H1 (cell line): ENCODE measurements at regions of chr16 and their contacts with region 1.

Region 1: GRCh38 chr16:55842369-55843104 is 9.6 kb upstream of the CES1 start:
- DNase-seq: peak in 1 of 2 experiments; percentile 43
- H3K4me3 ChIP-seq: no peak overlapping the region
- H3K27ac ChIP-seq: no peak overlapping the region
- H3K4me1 ChIP-seq: no peaks in the 10 kb centered on the region
- H3K27me3 ChIP-seq: no peaks in the 10 kb centered on the region
- CTCF ChIP-seq: peak in 2 of 3 experiments; percentile 60 to 70; a peak in 3 of 4 replicates
- EP300 ChIP-seq: no peak
- POLR2A ChIP-seq: no peak
- RAD21 ChIP-seq: peak; percentile 88

Region 2: GRCh38 chr16:55529018-55529417 is 313.5 kb before region 1 on chr16:
- CTCF ChIA-PET with region 1: no interaction called
- POLR2A ChIA-PET with region 1: no interaction called
- DNase-seq: no peak
- H3K4me3 ChIP-seq: no peak overlapping the region
- H3K27ac ChIP-seq: no peak overlapping the region
- H3K4me1 ChIP-seq: no peaks in the 10 kb centered on the region
- H3K27me3 ChIP-seq: no peaks in the 10 kb centered on the region
- CTCF ChIP-seq: no peak
- EP300 ChIP-seq: no peak
- POLR2A ChIP-seq: no peak
- RAD21 ChIP-seq: no peak

Region 3: DNA sequence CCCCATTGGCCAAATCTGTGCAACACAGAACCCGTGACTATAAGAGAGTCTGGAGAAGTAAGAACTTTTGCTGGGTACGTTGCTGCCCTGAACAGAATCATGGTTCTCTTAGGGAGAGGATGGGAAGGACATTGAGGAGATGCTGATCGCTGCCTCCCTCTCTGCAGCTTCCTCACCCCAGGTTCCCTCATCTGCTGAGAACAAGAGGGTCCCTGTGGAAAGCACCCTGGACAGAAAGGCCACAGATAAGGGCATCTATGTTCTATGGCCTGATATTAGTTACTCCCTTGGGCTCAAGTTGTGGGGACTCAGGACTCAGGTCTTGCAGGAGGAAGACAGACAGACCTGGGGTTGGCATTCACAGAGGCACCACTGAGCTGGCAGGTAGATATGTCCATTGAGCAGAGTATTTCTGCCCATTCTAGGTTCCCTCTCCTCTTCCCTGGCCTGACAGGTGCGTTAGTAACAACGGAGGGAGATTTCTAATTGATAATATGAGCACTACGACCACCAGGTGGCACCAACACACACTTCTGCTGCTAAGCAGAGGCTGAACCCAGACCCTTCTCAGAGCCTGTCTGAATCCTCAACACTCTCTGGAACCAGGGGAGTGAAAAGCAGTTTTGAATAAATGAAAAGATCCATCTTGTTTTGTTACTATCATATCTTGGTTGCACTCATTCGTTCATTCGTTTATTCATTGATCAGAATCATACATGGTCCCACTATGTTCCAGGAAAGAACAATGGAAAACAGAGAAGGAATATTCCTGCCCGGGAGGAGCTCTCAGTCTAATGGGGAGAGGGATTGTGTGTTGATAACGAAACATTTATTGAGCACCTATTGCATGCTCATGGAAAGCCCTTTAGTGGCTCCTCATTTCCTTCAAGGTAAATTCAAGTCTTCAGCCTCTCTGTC is 130.3 kb before region 1 on chr16:
- CTCF ChIA-PET with region 1: interaction called, 114 read pairs
- POLR2A ChIA-PET with region 1: no interaction called
- DNase-seq: peak in 1 of 2 experiments; percentile 81
- H3K4me3 ChIP-seq: no peak overlapping the region
- H3K27ac ChIP-seq: no peak overlapping the region
- H3K4me1 ChIP-seq: no peaks in the 10 kb centered on the region
- H3K27me3 ChIP-seq: no peaks in the 10 kb centered on the region; a peak in 1 of 7 replicates
- CTCF ChIP-seq: peak; percentile 37 to 80 (median 78)
- EP300 ChIP-seq: no peak
- POLR2A ChIP-seq: no peak
- RAD21 ChIP-seq: peak; percentile 82 to 85

Region 4: DNA sequence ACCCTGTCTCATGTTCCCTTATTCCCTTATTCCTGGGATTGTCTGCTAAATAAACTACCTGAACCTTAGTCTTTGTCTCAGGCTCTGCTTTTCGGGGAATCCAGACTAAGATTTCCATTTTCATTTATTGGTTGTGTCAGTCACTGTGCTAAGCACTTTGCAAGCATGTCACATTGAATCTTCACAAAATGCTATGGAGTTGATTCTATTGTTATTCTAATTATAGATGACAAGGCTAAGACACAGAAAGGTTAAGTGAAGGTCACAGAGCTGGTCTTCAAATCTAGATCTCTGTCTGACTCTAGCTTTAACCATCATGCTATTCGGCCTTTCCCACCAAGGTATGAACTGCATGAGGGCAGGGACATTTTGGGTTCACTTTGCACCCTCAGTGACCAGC is 46.0 kb after region 1 on chr16:
- CTCF ChIA-PET with region 1: no interaction called
- POLR2A ChIA-PET with region 1: no interaction called
- DNase-seq: no peak
- H3K4me3 ChIP-seq: no peak overlapping the region
- H3K27ac ChIP-seq: no peak overlapping the region
- H3K4me1 ChIP-seq: peaks cover 0 to 3% (median 0%) of the 10 kb centered on the region in 4 experiments; a peak in 1 of 7 replicates
- H3K27me3 ChIP-seq: no peaks in the 10 kb centered on the region
- CTCF ChIP-seq: no peak
- EP300 ChIP-seq: no peak
- POLR2A ChIP-seq: no peak
- RAD21 ChIP-seq: no peak

Region 5: DNA sequence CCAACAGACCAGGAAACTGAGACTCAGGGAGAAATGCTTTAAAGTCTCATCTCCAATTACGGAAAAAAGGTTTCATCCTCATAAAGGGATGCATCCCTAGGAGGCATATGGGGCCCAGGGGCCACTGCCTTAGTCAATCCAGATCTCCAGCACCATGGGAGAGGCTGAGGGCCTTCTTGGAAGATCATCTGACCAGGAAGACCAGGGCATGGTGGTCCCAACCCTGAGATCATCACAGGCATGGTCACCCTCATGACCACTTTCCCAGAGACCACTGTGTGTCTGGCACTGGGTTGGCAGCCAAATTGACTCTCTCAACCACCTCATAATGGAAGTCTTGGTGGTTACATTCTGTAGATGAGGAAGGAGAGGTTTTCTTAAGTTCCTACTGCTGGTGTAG is 56.1 kb after region 1 on chr16:
- CTCF ChIA-PET with region 1: no interaction called
- POLR2A ChIA-PET with region 1: no interaction called
- DNase-seq: no peak
- H3K4me3 ChIP-seq: no peak overlapping the region
- H3K27ac ChIP-seq: no peak overlapping the region
- H3K4me1 ChIP-seq: no peaks in the 10 kb centered on the region
- H3K27me3 ChIP-seq: no peaks in the 10 kb centered on the region
- CTCF ChIP-seq: no peak
- EP300 ChIP-seq: no peak
- POLR2A ChIP-seq: no peak
- RAD21 ChIP-seq: no peak